Heart left ventricle (tissue), 16 donors: ENCODE measurements at regions of chr6 and their contacts with region 1.

Region 1: GRCh38 chr6:150395398-150396009 is 26.7 kb downstream of the IYD start:
- DNase-seq: peak in 3 of 5 donors; percentile 34 to 43 (median 37)
- ATAC-seq: peak; percentile 58 to 78 (median 77)
- H3K4me3 ChIP-seq: no peak overlapping the region
- H3K27ac ChIP-seq: no peak overlapping the region
- H3K4me1 ChIP-seq: no peaks in the 10 kb centered on the region
- H3K27me3 ChIP-seq: peaks cover 0 to 3% (median 0%) of the 10 kb centered on the region in 9 donors
- CTCF ChIP-seq: peak; percentile 52 to 84 (median 72)
- POLR2A ChIP-seq: no peak

Region 2: DNA sequence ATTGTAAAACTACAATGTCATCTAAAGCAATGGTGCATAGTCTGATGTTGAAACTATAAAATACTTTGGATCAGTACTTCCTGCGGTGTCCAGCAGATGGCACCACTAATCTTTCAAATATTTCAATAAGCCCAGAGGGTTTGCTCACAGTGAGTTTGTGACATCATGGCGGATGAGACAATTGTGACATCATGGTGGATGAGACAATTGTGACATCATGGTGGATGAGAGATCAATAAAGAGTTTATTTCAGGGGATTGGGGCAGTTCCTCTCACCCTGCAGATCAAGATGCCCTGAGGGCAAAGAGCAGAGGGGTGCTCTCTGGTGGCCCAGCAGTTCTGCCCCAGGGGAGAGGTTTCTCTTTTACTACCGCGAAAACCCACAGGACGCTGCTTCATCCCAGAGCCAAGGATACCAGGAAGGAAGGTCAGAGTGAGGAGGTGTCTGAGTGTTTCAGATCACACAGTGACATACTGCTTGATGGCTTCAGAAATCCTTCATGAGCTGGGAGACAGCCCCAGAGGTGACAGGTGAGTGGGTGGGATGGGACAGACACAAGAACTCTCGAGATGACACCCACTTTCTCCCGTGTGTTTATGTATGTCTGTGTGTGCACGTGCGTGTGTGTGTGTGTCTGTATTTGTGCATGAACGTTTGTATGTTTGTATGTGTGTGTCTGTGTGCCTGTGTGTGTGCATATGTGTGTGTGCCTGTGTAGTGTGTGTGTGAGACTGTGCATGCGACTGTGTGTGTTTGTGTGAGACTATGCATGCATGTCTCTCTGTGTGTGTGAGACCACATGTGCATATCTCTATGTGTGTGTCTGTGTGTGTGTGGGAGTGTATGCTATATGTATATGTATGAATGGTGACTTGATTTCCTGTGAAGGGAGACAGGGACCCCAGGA is 461.0 kb before region 1 on chr6:
- intact Hi-C with region 1: loop called in 1 of 10 experiments (anchors 10 kb)
- DNase-seq: peak in 2 of 5 donors; percentile 34 to 44
- ATAC-seq: peak in 3 of 4 donors; percentile 65 to 77 (median 69)
- H3K4me3 ChIP-seq: no peak overlapping the region
- H3K27ac ChIP-seq: no peak overlapping the region
- H3K4me1 ChIP-seq: peaks cover 0 to 13% (median 10%) of the 10 kb centered on the region in 12 donors
- H3K27me3 ChIP-seq: peaks cover 22 to 96% (median 64%) of the 10 kb centered on the region in 9 donors
- CTCF ChIP-seq: peak; percentile 70 to 86 (median 79)
- POLR2A ChIP-seq: no peak

Region 3: DNA sequence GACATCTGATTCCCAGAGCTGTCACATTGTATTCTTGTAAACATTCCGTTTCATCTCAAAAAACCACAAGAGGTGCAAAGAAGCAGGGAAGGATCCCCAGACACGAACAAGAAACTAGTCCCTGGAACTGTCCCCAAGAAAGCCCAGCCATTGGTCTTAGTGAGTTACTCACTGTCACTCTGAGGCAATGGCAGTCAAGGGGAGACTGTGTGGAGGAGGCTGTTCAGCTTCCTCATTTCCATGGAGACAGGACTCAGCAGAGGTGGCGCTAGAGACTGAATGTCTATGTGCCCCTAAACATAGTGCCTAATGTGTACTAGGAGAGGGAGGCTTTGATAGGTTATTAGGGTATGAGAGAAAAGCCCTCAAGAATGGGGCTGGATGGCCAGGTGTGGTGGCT is 420.7 kb before region 1 on chr6:
- intact Hi-C with region 1: no loop called
- DNase-seq: no peak
- ATAC-seq: no peak
- H3K4me3 ChIP-seq: no peak overlapping the region
- H3K27ac ChIP-seq: no peak overlapping the region
- H3K4me1 ChIP-seq: no peaks in the 10 kb centered on the region
- H3K27me3 ChIP-seq: peaks cover 2 to 52% (median 13%) of the 10 kb centered on the region in 9 donors
- CTCF ChIP-seq: no peak
- POLR2A ChIP-seq: no peak

Region 4: DNA sequence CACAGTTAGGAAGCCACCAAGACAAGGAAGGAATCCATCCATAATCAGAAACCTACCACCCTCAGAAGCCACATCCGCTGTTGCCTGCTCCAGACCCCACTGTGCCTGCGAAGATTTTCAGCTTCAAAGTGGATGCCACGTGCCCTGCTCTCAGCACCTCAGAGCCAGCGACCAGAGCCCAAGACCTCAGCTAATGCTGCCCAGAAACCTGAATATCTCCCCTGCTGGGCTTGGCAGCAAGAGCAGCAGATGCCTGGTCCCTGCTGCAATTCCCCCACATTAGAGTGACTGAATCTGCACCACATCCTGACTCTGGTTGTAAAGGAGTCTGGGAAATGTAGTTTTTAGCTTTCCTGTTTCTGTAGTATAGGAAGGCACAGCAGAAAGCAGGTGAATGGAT is 315.9 kb before region 1 on chr6:
- intact Hi-C with region 1: loop called (anchors 1 to 5 kb)
- DNase-seq: no peak
- ATAC-seq: no peak
- H3K4me3 ChIP-seq: no peak overlapping the region
- H3K27ac ChIP-seq: no peak overlapping the region
- H3K4me1 ChIP-seq: no peaks in the 10 kb centered on the region
- H3K27me3 ChIP-seq: peaks cover 0 to 10% (median 0%) of the 10 kb centered on the region in 9 donors
- CTCF ChIP-seq: no peak
- POLR2A ChIP-seq: no peak

Region 5: GRCh38 chr6:150325066-150325772 is 70.3 kb before region 1 on chr6:
- intact Hi-C with region 1: no loop called
- DNase-seq: no peak
- ATAC-seq: no peak
- H3K4me3 ChIP-seq: no peak overlapping the region
- H3K27ac ChIP-seq: no peak overlapping the region
- H3K4me1 ChIP-seq: peaks cover 3 to 54% (median 13%) of the 10 kb centered on the region in 12 donors
- H3K27me3 ChIP-seq: no peaks in the 10 kb centered on the region
- CTCF ChIP-seq: no peak
- POLR2A ChIP-seq: no peak

Region 6: DNA sequence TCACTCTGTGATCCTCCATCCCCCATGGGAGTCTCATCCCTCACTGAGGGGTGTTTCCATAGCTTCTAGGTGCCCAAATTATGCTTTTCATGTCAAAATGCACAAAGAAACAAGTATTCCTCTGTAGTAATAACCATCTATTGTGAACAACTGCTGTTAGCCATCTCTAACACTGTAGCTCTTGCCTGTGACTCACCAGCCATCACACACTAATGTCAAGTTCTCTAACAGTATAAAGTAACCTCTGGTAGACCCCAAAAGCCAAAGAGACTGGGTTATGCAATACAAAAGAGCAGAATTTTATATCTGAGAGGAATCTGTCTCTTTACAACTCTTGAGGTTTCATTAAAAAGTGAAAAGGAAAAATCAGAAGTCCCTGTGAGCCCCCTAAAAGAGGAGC is 52.1 kb before region 1 on chr6:
- intact Hi-C with region 1: loop called in 2 of 10 experiments (anchors 5 to 10 kb)
- DNase-seq: no peak
- ATAC-seq: no peak
- H3K4me3 ChIP-seq: no peak overlapping the region
- H3K27ac ChIP-seq: no peak overlapping the region
- H3K4me1 ChIP-seq: no peaks in the 10 kb centered on the region
- H3K27me3 ChIP-seq: no peaks in the 10 kb centered on the region
- CTCF ChIP-seq: no peak
- POLR2A ChIP-seq: no peak